GM12878 (cell line): ENCODE measurements at regions of chr7 and their contacts with region 1.

Region 1: GRCh38 chr7:19754521-19755116 is 18.8 kb downstream of the TMEM196 start:
- DNase-seq: peak; percentile 15
- ATAC-seq: peak; percentile 63
- H3K4me3 ChIP-seq: no peak overlapping the region
- H3K27ac ChIP-seq: no peak overlapping the region
- H3K4me1 ChIP-seq: no peaks in the 10 kb centered on the region
- H3K27me3 ChIP-seq: no peaks in the 10 kb centered on the region
- CTCF ChIP-seq: peak; percentile 58 to 68 (median 64)
- EP300 ChIP-seq: no peak
- POLR2A ChIP-seq: no peak
- RAD21 ChIP-seq: peak; percentile 63

Region 2: GRCh38 chr7:18855796-18856195 is 898.8 kb before region 1 on chr7:
- CTCF ChIA-PET with region 1: no interaction called
- POLR2A ChIA-PET with region 1: no interaction called
- RAD21 ChIA-PET with region 1: no interaction called
- SMC1A ChIA-PET with region 1: no interaction called
- in situ Hi-C with region 1: no loop called
- intact Hi-C with region 1: no loop called
- DNase-seq: no peak
- ATAC-seq: no peak
- H3K4me3 ChIP-seq: no peak overlapping the region
- H3K27ac ChIP-seq: no peak overlapping the region
- H3K4me1 ChIP-seq: no peaks in the 10 kb centered on the region
- H3K27me3 ChIP-seq: no peaks in the 10 kb centered on the region
- CTCF ChIP-seq: no peak
- EP300 ChIP-seq: no peak
- POLR2A ChIP-seq: no peak
- RAD21 ChIP-seq: no peak

Region 3: DNA sequence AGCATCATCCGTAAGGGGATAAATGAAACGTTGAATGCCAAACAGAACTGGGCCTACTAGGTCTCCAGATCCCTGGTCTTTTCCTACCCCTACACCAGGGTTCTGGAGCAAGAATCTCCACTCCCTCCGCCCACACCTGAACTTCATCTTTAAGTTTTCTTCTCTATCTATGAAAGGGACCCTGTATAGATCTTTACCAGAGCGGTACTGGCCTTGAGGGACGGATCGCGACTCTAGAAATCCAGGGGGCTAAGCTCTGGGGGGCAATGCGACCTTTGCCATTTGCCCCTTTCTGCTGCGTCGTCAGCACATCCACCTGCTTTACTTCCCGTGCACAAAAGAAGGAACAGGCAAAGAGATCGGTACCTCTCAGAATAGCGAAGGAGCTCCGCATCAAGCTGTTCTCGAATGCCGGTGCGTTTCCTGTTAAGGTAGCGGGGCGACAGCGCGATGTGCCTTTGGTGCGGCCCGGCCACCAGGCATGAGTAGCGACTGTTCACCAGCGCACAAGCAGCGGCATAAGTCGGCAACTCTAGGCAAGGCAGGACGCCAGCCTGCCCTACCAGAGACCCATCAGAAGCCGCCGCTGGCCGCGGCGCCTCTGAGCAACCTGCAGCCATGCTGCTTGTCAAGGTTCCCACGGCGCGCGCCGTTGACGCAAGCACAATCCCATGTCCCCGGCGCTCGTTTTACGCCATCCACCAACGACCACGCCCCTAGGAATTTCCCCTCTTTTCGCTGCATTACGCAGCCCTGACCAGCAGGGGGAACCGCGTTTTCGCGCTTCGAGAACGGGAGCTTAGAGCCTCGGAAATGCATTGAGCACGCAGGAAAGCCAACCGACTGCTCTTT is 46.0 kb before region 1 on chr7 and contains the start of gene POLR1F:
- CTCF ChIA-PET with region 1: interaction called, 21 read pairs
- POLR2A ChIA-PET with region 1: no interaction called
- RAD21 ChIA-PET with region 1: interaction called, 10 read pairs
- SMC1A ChIA-PET with region 1: interaction called, 4 read pairs
- in situ Hi-C with region 1: no loop called
- intact Hi-C with region 1: no loop called
- DNase-seq: peak; percentile 90
- ATAC-seq: peak; percentile 95
- H3K4me3 ChIP-seq: peak within 1 kb of the TSS; percentile 90
- H3K27ac ChIP-seq: peak within 1 kb of the TSS; percentile 62
- H3K4me1 ChIP-seq: 0 out of 2 replicates have a peak, but pooled peaks cover 3% of the 10 kb centered on the region
- H3K27me3 ChIP-seq: no peaks in the 10 kb centered on the region
- CTCF ChIP-seq: peak; percentile 92 to 98 (median 97); a peak in 5 of 6 replicates
- EP300 ChIP-seq: 0 out of 4 replicates have a peak, but pooled peaks of 1 of the 2 experiments have one; percentile 33
- POLR2A ChIP-seq: peak; percentile 99
- RAD21 ChIP-seq: peak; percentile 59
- polyA plus RNA-seq, gene POLR1F: 95.3 to 129 TPM

Region 4: DNA sequence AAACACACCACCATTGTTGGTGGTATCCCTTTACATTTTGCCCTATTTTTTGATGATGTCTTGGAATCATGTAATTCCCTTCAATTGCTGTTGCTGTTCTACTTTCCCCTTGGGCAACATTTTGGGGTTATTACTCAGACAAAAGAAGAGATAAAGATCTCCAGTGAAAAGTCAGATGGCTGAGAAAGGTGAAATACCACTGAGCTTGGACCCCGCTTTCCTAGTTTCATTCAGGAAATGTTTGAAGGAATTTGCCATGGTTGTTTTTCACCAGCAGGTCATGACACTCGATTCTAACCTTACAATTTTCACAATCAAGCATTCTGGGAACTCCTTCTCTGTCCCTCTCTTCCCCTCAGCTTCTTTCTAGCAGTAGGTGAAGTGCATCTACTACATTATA is 378.0 kb after region 1 on chr7:
- CTCF ChIA-PET with region 1: no interaction called
- POLR2A ChIA-PET with region 1: no interaction called
- RAD21 ChIA-PET with region 1: no interaction called
- SMC1A ChIA-PET with region 1: no interaction called
- in situ Hi-C with region 1: no loop called
- intact Hi-C with region 1: loop called (anchors 5 kb)
- DNase-seq: no peak
- ATAC-seq: no peak
- H3K4me3 ChIP-seq: no peak overlapping the region
- H3K27ac ChIP-seq: no peak overlapping the region
- H3K4me1 ChIP-seq: no peaks in the 10 kb centered on the region
- H3K27me3 ChIP-seq: no peaks in the 10 kb centered on the region
- CTCF ChIP-seq: no peak
- EP300 ChIP-seq: no peak
- POLR2A ChIP-seq: no peak
- RAD21 ChIP-seq: no peak

Region 5: GRCh38 chr7:20440472-20441105 is 686.0 kb after region 1 on chr7:
- CTCF ChIA-PET with region 1: interaction called, 12 read pairs
- POLR2A ChIA-PET with region 1: no interaction called
- RAD21 ChIA-PET with region 1: no interaction called
- SMC1A ChIA-PET with region 1: interaction called, 4 read pairs
- in situ Hi-C with region 1: no loop called
- intact Hi-C with region 1: loop called (anchors 10 kb)
- DNase-seq: no peak
- ATAC-seq: peak; percentile 35; the same call in 1 of the 3 replicates
- H3K4me3 ChIP-seq: no peak overlapping the region
- H3K27ac ChIP-seq: no peak overlapping the region
- H3K4me1 ChIP-seq: peaks cover 15% of the 10 kb centered on the region; the same call in 1 of the 2 replicates
- H3K27me3 ChIP-seq: no peaks in the 10 kb centered on the region
- CTCF ChIP-seq: peak; percentile 34 to 65 (median 58)
- EP300 ChIP-seq: no peak
- POLR2A ChIP-seq: no peak
- RAD21 ChIP-seq: peak; percentile 60

Region 6: DNA sequence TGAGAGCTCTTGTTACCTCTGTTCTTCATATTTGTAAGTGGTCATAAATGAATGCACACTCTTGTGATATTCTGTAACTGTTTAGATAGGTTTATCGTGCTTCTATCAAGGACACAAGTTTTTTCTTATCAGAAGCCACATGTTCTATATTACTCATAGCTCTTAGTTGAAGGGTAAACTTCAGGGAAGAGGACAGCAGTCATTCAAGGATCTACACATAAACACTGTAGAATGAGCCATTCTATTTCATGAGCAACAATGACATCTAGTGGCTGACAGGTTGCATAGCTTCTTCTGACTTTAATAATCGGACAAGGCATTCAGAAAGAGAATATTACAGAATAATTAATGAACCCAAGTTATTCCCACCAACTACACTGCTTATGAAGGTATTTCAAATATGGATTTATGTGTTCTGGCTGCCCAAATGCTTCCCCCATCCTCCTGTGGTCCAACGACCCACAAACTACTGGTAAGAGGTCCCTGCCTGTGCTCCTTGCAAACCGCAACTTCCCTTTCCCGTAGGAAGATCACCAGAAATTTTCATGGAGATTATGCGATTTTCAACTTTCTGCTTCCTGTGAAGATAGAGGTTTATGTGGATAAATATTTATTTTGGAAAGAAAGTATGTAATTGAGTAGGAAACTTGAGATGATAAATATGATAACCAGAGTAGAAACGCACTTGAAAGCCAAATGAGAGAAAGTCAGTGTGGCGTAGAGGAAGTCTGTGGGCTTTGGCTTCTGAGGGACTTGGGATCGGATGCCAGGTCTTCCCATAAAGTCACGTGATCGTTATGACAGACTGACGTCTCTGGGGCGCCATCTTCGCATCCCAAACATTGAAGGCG is 844.1 kb after region 1 on chr7:
- CTCF ChIA-PET with region 1: interaction called, 28 read pairs
- POLR2A ChIA-PET with region 1: no interaction called
- RAD21 ChIA-PET with region 1: interaction called, 13 read pairs
- SMC1A ChIA-PET with region 1: interaction called, 10 read pairs
- in situ Hi-C with region 1: loop called (anchors 5 kb)
- intact Hi-C with region 1: no loop called
- DNase-seq: peak; percentile 43
- ATAC-seq: peak; percentile 88
- H3K4me3 ChIP-seq: no peak overlapping the region
- H3K27ac ChIP-seq: no peak overlapping the region
- H3K4me1 ChIP-seq: no peaks in the 10 kb centered on the region
- H3K27me3 ChIP-seq: no peaks in the 10 kb centered on the region
- CTCF ChIP-seq: peak; percentile 69 to 91 (median 84)
- EP300 ChIP-seq: no peak
- POLR2A ChIP-seq: no peak
- RAD21 ChIP-seq: peak; percentile 98